ENCODE measurements at regions of chr9 and their contacts with region 1.

Region 1: DNA sequence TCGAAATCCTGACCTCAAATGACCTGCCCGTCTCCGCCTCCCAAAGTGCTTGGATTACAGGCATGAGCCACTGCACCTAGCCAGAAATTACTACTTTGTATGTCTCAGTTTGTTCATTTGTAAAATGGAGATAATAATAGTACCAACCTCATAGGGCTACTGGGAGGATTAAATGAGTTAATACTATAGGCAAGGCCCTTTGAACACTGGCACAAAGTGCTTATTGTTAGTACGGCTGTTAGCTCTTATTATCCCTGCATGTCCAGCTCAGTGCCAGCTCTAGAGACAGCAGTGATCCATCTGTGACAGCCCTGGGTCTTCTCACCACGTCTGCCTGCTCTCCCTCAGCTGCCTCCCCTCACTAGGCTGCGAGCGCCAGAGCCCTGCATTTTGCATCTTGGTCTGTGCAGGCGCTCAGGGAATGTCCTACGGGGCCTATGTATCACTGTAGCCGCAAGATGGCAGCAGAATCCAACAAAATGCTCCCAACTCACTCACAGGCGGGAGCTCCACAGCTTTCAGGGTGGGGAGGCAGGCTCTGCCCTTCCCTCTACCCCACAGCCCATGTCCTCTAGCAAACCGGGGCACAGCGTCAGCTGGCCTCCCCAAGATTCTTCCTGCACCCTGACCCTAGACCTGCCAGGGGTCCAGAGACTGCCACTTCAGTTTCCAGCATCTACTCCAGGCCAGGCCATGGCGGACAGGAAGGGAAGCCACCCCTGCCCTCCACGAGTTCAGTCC is 17.7 kb upstream of the AKNA start:
- DNase-seq: no peak
- H3K4me3 ChIP-seq: no peak overlapping the region
- H3K27me3 ChIP-seq: no peaks in the 10 kb centered on the region
- CTCF ChIP-seq: peak; percentile 85

Region 2: DNA sequence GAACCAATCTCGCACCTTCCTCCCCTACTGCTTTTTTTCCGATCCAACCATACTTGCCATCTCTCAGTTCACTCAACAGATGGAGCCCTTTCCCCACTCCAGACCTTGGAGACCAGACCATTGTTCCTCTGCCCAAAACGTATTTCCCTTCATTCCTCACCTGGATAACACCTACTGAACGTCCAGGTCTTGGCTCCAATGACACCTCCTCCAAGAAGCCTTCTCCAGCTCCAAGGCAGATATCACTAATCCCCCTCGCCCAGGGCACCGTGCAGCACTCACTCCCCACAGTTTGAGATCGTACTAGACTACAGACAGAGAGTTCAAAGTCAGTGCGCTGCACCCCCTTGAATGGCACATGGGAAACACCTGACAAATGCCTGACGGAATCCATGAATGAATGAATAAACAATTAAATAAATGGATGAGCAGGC is 29.4 kb after region 1 on chr9:
- CTCF ChIA-PET with region 1: interaction called, 23 read pairs
- POLR2A ChIA-PET with region 1: no interaction called
- DNase-seq: no peak
- H3K4me3 ChIP-seq: no peak overlapping the region
- H3K27me3 ChIP-seq: peaks cover 3% of the 10 kb centered on the region; the same call in 1 of the 2 replicates
- CTCF ChIP-seq: peak; percentile 67

Region 3: DNA sequence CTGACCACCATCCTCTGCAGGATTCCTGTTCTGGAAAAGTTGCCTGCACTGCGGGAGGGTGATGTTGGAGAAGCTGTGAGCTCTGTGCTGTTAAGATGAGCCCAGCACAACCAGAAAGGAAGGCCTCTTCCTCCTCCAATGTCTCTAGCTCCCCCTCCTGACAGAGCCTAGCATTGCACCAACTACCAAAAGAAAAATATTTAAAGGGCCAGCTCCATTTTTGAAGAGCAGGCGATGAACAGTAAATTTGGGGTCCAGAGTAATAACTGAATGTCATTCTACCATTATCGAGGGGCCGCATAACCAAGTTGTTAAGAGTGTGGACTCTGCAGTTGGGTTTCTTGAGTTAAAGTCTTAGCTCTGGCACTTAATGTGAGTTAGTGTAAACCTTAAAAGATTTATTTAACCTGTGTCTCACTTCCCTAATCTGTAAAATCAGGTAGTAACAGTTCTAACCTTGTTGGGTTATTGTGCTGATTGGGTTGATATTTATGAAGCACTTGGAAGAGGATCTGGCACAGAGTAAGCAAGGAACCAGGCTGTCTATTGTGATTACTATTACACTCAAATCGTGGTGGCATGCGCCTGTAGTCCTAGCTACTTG is 248.2 kb after region 1 on chr9:
- CTCF ChIA-PET with region 1: interaction called, 150 read pairs
- POLR2A ChIA-PET with region 1: interaction called, 5 read pairs
- DNase-seq: peak; percentile 25
- H3K4me3 ChIP-seq: no peak overlapping the region
- H3K27me3 ChIP-seq: no peaks in the 10 kb centered on the region
- CTCF ChIP-seq: peak; percentile 96

Region 4: DNA sequence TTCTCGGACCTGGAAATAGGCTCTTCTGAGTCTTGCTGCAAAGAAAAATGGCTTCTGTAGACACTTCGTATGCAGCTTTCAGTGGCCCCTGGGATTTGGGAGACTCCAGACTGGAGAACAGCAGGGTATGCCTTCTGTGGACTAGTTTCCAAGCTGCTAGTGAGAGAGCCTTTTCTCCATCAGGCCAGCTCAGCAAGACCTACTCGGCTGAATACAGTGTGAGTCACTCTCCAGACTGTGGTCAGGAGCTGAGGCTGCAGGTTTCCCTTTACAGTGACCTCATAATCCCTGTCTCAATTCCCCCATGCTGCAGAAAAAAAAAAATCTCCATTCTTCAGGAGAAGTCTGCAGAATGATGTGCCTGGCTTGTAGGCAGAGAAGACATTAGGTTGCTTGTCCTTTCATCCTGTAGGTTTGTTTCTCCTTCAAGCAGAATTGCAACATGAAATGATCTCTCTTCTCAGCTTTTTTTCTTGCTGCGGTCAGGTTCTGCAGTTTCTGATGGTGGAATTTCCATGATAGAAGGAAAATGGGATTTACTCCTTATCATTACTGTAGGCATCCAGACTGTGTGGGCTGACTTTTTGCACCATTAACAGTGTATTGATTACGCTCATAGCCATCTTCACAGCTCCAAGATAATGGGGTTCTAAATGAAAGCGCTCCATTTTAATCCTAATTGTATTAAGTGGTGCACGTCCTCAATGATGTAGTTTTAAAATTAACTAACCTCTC is 603.2 kb after region 1 on chr9:
- CTCF ChIA-PET with region 1: interaction called, 10 read pairs
- POLR2A ChIA-PET with region 1: no interaction called
- DNase-seq: peak; percentile 52
- H3K4me3 ChIP-seq: no peak overlapping the region
- H3K27me3 ChIP-seq: peaks cover 5% of the 10 kb centered on the region
- CTCF ChIP-seq: no peak